ENCODE measurements at regions of chr17 and their contacts with region 1.

Region 1: GRCh38 chr17:72539981-72540897 is 419.4 kb downstream of the SOX9 start:
- DNase-seq: peak; percentile 60 to 84 (median 82)
- ATAC-seq: peak; percentile 100
- H3K4me3 ChIP-seq: no peak overlapping the region
- H3K27ac ChIP-seq: no peak overlapping the region
- H3K4me1 ChIP-seq: peaks cover 0 to 7% of the 10 kb centered on the region in 2 experiments; a peak in 1 of 5 replicates
- H3K27me3 ChIP-seq: peaks cover 4 to 28% of the 10 kb centered on the region in 2 experiments; a peak in 3 of 5 replicates
- CTCF ChIP-seq: peak; percentile 66 to 86 (median 81)
- EP300 ChIP-seq: no peak
- POLR2A ChIP-seq: no peak
- RAD21 ChIP-seq: peak; percentile 77 to 94

Region 2: GRCh38 chr17:70636517-70637133 is 1903.6 kb before region 1 on chr17:
- CTCF ChIA-PET with region 1: no interaction called
- POLR2A ChIA-PET with region 1: no interaction called
- in situ Hi-C with region 1: loop called (anchors 10 kb)
- intact Hi-C with region 1: loop called (anchors 1 kb)
- DNase-seq: peak; percentile 18 to 44 (median 22)
- ATAC-seq: no peak
- H3K4me3 ChIP-seq: no peak overlapping the region
- H3K27ac ChIP-seq: no peak overlapping the region
- H3K4me1 ChIP-seq: no peaks in the 10 kb centered on the region
- H3K27me3 ChIP-seq: no peaks in the 10 kb centered on the region
- CTCF ChIP-seq: peak in 1 of 3 experiments; percentile 57; a peak in 2 of 6 replicates
- EP300 ChIP-seq: no peak
- POLR2A ChIP-seq: no peak
- RAD21 ChIP-seq: peak; percentile 64 to 79

Region 3: GRCh38 chr17:70767102-70767701 is 1773.0 kb before region 1 on chr17:
- CTCF ChIA-PET with region 1: no interaction called
- POLR2A ChIA-PET with region 1: no interaction called
- in situ Hi-C with region 1: no loop called
- intact Hi-C with region 1: loop called (anchors 2 kb)
- DNase-seq: peak in 2 of 4 experiments; percentile 4 to 9
- ATAC-seq: no peak
- H3K4me3 ChIP-seq: no peak overlapping the region
- H3K27ac ChIP-seq: no peak overlapping the region
- H3K4me1 ChIP-seq: no peaks in the 10 kb centered on the region
- H3K27me3 ChIP-seq: no peaks in the 10 kb centered on the region
- CTCF ChIP-seq: peak in 2 of 3 experiments; percentile 43 to 47; a peak in 4 of 6 replicates
- EP300 ChIP-seq: no peak
- POLR2A ChIP-seq: no peak
- RAD21 ChIP-seq: peak; percentile 47 to 65; a peak in 3 of 4 replicates

Region 4: GRCh38 chr17:72388765-72389473 is 151.3 kb before region 1 on chr17:
- CTCF ChIA-PET with region 1: no interaction called
- POLR2A ChIA-PET with region 1: no interaction called
- in situ Hi-C with region 1: no loop called
- intact Hi-C with region 1: no loop called
- DNase-seq: no peak
- ATAC-seq: no peak
- H3K4me3 ChIP-seq: no peak overlapping the region
- H3K27ac ChIP-seq: no peak overlapping the region
- H3K4me1 ChIP-seq: no peaks in the 10 kb centered on the region
- H3K27me3 ChIP-seq: no peaks in the 10 kb centered on the region
- CTCF ChIP-seq: no peak
- EP300 ChIP-seq: no peak
- POLR2A ChIP-seq: no peak
- RAD21 ChIP-seq: no peak

Region 5: DNA sequence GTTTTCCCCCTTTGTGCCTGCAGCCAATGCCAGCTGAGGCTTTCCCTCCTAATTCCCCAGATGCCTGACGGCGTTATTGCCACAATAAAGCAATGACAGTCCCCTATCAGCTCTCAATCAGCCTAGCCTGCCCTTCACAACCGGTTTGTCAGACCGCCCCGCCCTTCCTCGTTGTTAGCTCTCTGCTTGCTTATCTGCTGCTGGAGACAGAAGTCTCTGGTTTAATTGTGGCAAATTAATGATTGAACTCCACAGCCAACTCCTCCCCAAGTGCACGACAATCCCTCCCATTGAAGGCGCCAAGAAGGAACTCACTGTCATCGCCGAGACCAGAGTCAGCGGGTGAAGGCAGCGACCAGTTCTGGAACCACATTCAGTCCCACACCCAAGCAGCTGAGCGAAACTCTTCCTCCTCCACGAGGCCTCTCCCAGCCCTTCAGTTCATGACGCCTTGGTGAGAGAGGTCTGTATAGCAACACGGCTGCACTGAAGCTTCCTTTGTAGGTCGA is 77.8 kb after region 1 on chr17:
- CTCF ChIA-PET with region 1: no interaction called
- POLR2A ChIA-PET with region 1: no interaction called
- in situ Hi-C with region 1: no loop called
- intact Hi-C with region 1: no loop called
- DNase-seq: peak in 1 of 4 experiments; percentile 7
- ATAC-seq: no peak
- H3K4me3 ChIP-seq: no peak overlapping the region
- H3K27ac ChIP-seq: no peak overlapping the region
- H3K4me1 ChIP-seq: no peaks in the 10 kb centered on the region
- H3K27me3 ChIP-seq: peaks cover 12 to 38% of the 10 kb centered on the region in 2 experiments
- CTCF ChIP-seq: no peak
- EP300 ChIP-seq: no peak
- POLR2A ChIP-seq: no peak
- RAD21 ChIP-seq: no peak